ENCODE measurements at regions of chr10 and their contacts with region 1.

Region 1: GRCh38 chr10:104353325-104354048 is at the start of gene CFAP58:
- DNase-seq: peak; percentile 89 to 94
- ATAC-seq: peak; percentile 91 to 94 (median 93)
- H3K4me3 ChIP-seq: peak within 1 kb of the TSS; percentile 68
- H3K27ac ChIP-seq: peak within 1 kb of the TSS; percentile 17
- H3K4me1 ChIP-seq: peaks cover 17% of the 10 kb centered on the region
- H3K27me3 ChIP-seq: peaks cover 0 to 6% (median 0%) of the 10 kb centered on the region in 3 donors
- CTCF ChIP-seq: peak; percentile 65
- total RNA-seq, gene CFAP58: 0.21 to 0.74 (median 0.56) TPM

Region 2: GRCh38 chr10:104291439-104291951 is 62.0 kb before region 1 on chr10:
- intact Hi-C with region 1: loop called (anchors 1 to 5 kb)
- DNase-seq: peak; percentile 89 to 94
- ATAC-seq: peak; percentile 98 to 99 (median 98)
- H3K4me3 ChIP-seq: no peak overlapping the region
- H3K27ac ChIP-seq: no peak overlapping the region
- H3K4me1 ChIP-seq: no peaks in the 10 kb centered on the region
- H3K27me3 ChIP-seq: peaks cover 0 to 5% (median 0%) of the 10 kb centered on the region in 3 donors
- CTCF ChIP-seq: peak; percentile 100

Region 3: GRCh38 chr10:104304962-104305361 is 48.5 kb before region 1 on chr10:
- intact Hi-C with region 1: loop called in 1 of 2 experiments (anchors 1 kb)
- DNase-seq: no peak
- ATAC-seq: peak in 3 of 4 donors; percentile 35 to 71 (median 60)
- H3K4me3 ChIP-seq: no peak overlapping the region
- H3K27ac ChIP-seq: peak overlapping the region; percentile 74
- H3K4me1 ChIP-seq: peaks cover 52% of the 10 kb centered on the region
- H3K27me3 ChIP-seq: no peaks in the 10 kb centered on the region
- CTCF ChIP-seq: no peak

Region 4: DNA sequence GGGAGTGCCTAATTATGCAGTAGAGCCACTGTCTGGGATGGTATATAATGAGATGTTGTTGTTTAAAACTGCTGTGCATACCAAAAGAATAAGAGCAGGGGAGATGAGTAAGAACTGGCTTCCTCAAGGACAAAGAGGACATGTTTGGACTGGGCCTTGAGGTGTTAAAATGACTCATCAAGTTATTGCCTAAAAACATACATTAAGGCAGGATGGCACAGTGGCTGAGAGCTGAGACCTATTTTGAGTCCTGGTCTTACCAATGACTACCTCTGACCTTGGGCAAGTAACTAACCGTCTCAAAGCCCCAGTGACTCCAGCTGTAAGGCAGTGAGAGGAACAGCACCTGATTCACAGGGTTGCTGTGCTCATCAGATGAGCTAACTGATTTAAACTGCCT is 71.2 kb after region 1 on chr10:
- intact Hi-C with region 1: no loop called
- DNase-seq: no peak
- ATAC-seq: no peak
- H3K4me3 ChIP-seq: no peak overlapping the region
- H3K27ac ChIP-seq: no peak overlapping the region
- H3K4me1 ChIP-seq: no peaks in the 10 kb centered on the region
- H3K27me3 ChIP-seq: no peaks in the 10 kb centered on the region
- CTCF ChIP-seq: no peak

Measured in psoas muscle (tissue), 8 donors.